ENCODE measurements at regions of chr14 and their contacts with region 1.

Region 1: DNA sequence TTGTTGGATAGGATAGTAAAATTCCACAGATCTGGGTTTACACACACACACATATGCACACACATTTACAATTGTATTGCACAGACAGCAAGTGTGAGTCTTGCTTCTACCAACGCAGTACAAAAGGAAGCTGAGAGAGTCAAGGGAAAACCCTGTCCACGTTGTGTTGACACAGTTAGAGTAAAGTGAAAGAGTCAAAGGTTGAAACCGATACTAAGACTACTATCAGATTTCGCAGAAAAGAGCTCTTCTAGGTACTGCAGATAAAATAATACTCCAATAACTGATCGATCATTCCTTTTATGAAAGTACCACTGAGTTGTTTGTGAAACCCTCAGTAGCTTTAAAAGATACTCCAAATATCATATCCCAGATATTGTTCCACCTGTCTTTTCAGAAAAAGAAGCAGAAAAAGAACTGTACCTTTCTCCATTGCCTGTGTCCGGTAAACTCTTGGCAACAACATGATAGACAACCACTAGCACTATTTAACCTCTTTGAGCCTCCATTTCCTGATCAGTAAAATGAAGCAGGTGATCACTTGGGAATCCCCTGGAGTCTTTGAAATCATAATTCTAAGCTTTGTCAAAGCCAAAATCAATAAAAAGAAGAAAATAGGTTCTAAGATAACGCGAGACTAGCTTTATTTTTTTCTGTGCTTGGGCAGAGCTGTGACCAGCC is 224.6 kb upstream of the FOXN3 start:
- DNase-seq: peak; percentile 35
- H3K4me3 Mint-ChIP-seq: peak overlapping the region; percentile 53
- H3K27ac Mint-ChIP-seq: peak overlapping the region; percentile 83
- H3K4me1 Mint-ChIP-seq: peaks cover 54% of the 10 kb centered on the region
- H3K27me3 Mint-ChIP-seq: no peaks in the 10 kb centered on the region

Region 2: GRCh38 chr14:89613260-89614008 is 28.2 kb before region 1 on chr14:
- CTCF ChIA-PET with region 1: interaction called, 6 read pairs
- POLR2A ChIA-PET with region 1: interaction called, 24 read pairs
- intact Hi-C with region 1: no loop called
- DNase-seq: peak; percentile 69
- H3K4me3 Mint-ChIP-seq: peak overlapping the region; percentile 56
- H3K27ac Mint-ChIP-seq: peak overlapping the region; percentile 86
- H3K4me1 Mint-ChIP-seq: peaks cover 75% of the 10 kb centered on the region
- H3K27me3 Mint-ChIP-seq: no peaks in the 10 kb centered on the region

Region 3: DNA sequence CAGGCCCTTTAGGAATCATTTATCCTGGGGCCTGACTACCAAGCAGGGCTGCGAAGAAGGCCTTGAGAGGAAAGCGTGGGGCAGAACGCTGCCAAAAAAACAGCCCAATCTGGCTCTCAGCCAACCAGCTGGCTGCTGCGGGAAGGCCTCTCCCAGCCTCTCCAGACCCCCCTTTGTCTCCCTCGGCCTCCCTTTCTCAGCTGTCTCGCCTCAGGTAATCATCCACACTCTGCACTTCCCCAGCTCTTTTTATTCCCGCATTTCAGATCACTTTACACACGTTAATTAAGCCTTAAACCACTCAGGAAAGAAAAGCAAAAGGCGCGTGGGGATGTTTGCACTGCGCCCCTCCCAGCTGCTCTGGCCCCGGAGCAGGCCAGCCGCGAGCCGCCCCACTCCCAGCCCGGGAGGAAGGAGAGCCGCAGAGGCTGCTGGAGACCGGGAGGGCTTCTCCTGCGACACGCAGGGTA is 16.4 kb before region 1 on chr14:
- CTCF ChIA-PET with region 1: interaction called, 4 read pairs
- POLR2A ChIA-PET with region 1: interaction called, 24 read pairs
- intact Hi-C with region 1: loop called (anchors 1 kb)
- DNase-seq: no peak
- H3K4me3 Mint-ChIP-seq: no peak overlapping the region
- H3K27ac Mint-ChIP-seq: peak overlapping the region; percentile 80
- H3K4me1 Mint-ChIP-seq: peaks cover 77% of the 10 kb centered on the region
- H3K27me3 Mint-ChIP-seq: no peaks in the 10 kb centered on the region

Region 4: DNA sequence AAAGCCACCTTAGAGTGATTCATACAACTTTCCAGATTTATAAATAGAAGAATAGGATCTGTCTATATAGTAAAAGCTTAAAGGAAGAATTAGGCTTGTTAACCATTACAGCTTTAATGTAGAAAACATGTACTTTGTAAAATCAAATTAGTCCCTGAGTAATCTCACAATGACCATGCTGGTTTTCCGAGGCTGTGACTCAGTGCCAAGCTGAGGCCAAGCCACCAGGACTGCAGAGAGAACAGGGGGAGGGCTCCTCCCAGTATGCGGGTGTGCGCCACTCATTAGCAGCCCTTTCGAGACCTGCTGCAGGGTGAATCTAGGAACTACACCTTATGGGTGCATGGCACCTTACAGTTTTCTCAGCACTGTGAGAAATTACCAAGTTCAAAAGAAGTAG is 145.9 kb after region 1 on chr14:
- CTCF ChIA-PET with region 1: no interaction called
- POLR2A ChIA-PET with region 1: no interaction called
- intact Hi-C with region 1: no loop called
- DNase-seq: no peak
- H3K4me3 Mint-ChIP-seq: no peak overlapping the region
- H3K27ac Mint-ChIP-seq: no peak overlapping the region
- H3K4me1 Mint-ChIP-seq: no peaks in the 10 kb centered on the region
- H3K27me3 Mint-ChIP-seq: no peaks in the 10 kb centered on the region